MCF 10A (cell line): ENCODE measurements at regions of chr16 and their contacts with region 1.

Region 1: GRCh38 chr16:71610936-71611871 is 14.8 kb upstream of the MARVELD3 start:
- DNase-seq: peak; percentile 65
- H3K4me3 Mint-ChIP-seq: no peak overlapping the region
- H3K27ac Mint-ChIP-seq: no peak overlapping the region
- H3K4me1 Mint-ChIP-seq: no peaks in the 10 kb centered on the region
- H3K27me3 Mint-ChIP-seq: no peaks in the 10 kb centered on the region
- CTCF ChIP-seq: peak; percentile 90

Region 2: GRCh38 chr16:71412270-71413160 is 198.7 kb before region 1 on chr16:
- CTCF ChIA-PET with region 1: interaction called, 50 read pairs
- POLR2A ChIA-PET with region 1: no interaction called
- intact Hi-C with region 1: loop called (anchors 1 kb)
- DNase-seq: peak; percentile 80
- H3K4me3 Mint-ChIP-seq: no peak overlapping the region
- H3K27ac Mint-ChIP-seq: no peak overlapping the region
- H3K4me1 Mint-ChIP-seq: no peaks in the 10 kb centered on the region
- H3K27me3 Mint-ChIP-seq: peaks cover 53% of the 10 kb centered on the region
- CTCF ChIP-seq: peak; percentile 63

Region 3: DNA sequence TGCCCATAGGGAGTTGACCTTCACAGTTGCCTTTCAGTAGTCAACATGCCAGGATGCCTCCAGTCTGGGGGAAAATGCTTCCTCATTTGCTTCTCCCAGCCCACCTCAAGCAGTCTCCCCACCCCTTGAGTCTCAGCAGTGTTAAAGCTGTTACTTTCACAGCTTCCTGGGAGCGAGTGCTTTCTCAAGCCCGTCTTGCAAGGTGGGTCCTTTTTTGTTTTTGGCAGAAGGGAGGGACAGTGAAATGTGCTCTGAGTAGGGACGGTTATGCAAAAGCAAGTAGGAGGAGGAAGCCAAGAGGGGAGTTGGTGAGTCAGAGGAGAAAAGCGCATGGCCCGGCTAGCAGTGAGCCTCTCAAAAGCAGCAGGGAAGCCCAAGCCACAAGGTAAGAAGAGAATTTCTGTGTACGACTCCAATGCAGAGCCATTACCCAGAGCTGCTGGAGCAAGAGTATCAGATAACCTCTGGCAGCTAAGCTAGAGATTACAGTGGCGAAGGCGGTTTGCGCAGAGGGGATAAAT is 85.0 kb before region 1 on chr16 and contains the start of gene CHST4:
- CTCF ChIA-PET with region 1: interaction called, 14 read pairs
- POLR2A ChIA-PET with region 1: no interaction called
- intact Hi-C with region 1: no loop called
- DNase-seq: peak; percentile 70
- H3K4me3 Mint-ChIP-seq: no peak within 1 kb of the TSS
- H3K27ac Mint-ChIP-seq: no peak within 1 kb of the TSS
- H3K4me1 Mint-ChIP-seq: peaks cover 10% of the 10 kb centered on the region
- H3K27me3 Mint-ChIP-seq: no peaks in the 10 kb centered on the region
- CTCF ChIP-seq: no peak
- total RNA-seq, gene CHST4: 0.14 TPM in 1 of 2 replicates, not detected in the other

Region 4: DNA sequence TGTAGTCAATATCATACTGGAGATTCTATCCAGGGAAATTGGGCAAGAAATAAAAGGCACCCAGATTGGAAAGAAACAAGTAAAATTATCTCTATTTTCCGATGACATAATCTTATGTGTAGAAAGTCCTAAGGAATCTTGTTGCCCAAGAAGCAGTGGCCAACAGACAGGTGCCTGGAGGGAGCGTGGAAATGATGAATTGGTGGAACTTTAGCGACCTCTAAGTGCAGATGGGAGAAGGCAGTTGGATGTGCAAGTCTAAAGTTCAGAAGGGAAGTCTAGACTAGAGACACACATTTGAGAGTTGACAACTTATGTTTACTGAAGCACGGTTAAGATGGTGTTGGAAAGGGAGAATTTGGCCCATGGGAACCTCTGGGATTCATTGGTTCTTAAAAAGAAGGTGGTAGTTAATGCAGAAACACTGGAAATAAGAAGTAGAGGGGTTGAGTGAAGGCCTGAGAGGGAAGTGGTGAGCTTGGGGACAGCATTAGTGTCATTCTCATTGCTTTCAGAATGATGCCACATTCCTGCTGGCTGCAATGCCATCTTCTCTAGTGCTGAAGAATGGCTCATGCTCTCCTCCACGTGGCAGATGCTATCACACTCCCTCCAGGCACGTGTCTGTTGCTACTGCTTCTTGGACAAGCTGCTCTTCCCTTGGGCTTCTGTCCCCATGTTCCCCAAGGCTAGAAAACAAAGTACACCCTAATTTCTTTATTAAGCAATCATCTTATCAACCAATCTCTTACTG is 58.3 kb before region 1 on chr16:
- CTCF ChIA-PET with region 1: interaction called, 11 read pairs
- POLR2A ChIA-PET with region 1: interaction called, 3 read pairs
- intact Hi-C with region 1: no loop called
- DNase-seq: peak; percentile 30
- H3K4me3 Mint-ChIP-seq: no peak overlapping the region
- H3K27ac Mint-ChIP-seq: no peak overlapping the region
- H3K4me1 Mint-ChIP-seq: peaks cover 11% of the 10 kb centered on the region
- H3K27me3 Mint-ChIP-seq: peaks cover 36% of the 10 kb centered on the region
- CTCF ChIP-seq: no peak

Region 5: DNA sequence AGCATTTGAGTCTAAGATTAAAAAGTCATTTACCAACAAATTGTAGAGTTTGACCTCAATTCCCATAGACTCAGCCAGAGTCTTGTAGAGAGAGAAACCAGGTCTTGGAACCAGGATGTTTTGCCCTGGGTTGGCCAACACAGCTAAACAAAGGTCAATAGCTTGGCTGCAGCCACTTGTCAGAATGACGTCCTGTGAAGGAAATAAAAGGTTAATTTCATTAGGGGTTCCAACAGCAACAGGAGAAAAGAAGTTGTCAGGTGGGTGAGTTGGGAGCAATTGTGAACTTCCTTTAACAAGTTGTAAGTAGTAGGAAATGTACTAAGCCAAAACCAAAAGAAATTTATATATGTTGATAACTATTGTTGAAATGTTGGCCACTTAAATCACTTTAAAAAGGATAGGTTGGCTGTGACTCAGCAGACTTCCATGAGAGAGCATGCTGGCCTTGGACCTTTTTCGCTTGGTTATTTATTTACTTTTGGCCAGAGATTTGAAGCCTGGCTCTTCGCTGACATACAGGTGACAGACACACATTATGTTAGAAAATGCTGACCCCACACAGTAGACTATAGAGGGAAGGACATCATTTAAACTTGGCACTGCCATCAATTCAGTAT is 38.6 kb before region 1 on chr16:
- CTCF ChIA-PET with region 1: interaction called, 30 read pairs
- POLR2A ChIA-PET with region 1: interaction called, 3 read pairs
- intact Hi-C with region 1: no loop called
- DNase-seq: no peak
- H3K4me3 Mint-ChIP-seq: no peak overlapping the region
- H3K27ac Mint-ChIP-seq: no peak overlapping the region
- H3K4me1 Mint-ChIP-seq: peaks cover 6% of the 10 kb centered on the region
- H3K27me3 Mint-ChIP-seq: peaks cover 41% of the 10 kb centered on the region
- CTCF ChIP-seq: no peak

Region 6: DNA sequence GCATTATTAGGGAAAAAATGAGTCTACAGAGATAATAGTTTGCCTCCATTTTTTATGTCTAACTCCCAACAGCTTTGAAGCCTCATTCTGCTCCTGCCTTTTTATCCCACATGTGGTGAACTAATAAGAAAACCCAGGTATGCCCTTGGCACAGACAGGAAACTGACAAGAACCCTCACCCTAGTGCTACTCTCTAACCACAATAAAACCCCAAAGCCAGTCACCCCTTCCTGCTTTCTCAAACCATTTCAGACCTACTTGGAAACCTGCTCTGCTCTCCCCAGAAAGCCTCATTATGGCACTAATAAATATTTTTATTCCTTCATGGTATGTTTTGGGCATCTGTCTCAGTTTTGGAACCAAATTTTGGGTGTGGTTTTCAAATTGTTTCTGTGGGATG is 10.9 kb after region 1 on chr16:
- CTCF ChIA-PET with region 1: interaction called, 11 read pairs
- POLR2A ChIA-PET with region 1: interaction called, 4 read pairs
- intact Hi-C with region 1: no loop called
- DNase-seq: no peak
- H3K4me3 Mint-ChIP-seq: no peak overlapping the region
- H3K27ac Mint-ChIP-seq: no peak overlapping the region
- H3K4me1 Mint-ChIP-seq: no peaks in the 10 kb centered on the region
- H3K27me3 Mint-ChIP-seq: peaks cover 17% of the 10 kb centered on the region
- CTCF ChIP-seq: no peak

Region 7: DNA sequence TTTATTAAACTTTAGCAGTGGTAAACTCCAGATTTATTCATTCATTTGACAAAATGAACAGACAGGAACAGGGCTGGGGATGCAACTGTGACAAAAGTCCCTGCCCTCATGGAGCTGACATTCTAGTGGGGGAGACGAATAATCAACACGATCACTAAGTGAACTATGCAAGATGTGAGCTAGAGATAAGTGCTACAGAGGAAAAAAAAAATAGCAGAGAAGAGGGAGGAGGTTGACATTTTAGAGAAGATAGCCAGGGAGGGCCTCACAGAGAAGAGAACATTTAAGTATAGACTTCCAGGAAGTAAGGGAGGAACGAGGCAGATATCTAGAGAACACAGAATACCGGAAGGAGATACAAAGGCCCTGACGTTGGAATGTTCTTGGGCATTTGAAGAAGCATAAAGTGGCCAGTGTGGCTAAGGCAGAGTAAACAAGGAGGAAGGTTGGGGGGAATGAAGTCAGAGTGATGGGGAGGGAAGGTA is 215.4 kb after region 1 on chr16:
- CTCF ChIA-PET with region 1: no interaction called
- POLR2A ChIA-PET with region 1: no interaction called
- intact Hi-C with region 1: no loop called
- DNase-seq: no peak
- H3K4me3 Mint-ChIP-seq: no peak overlapping the region
- H3K27ac Mint-ChIP-seq: no peak overlapping the region
- H3K4me1 Mint-ChIP-seq: no peaks in the 10 kb centered on the region
- H3K27me3 Mint-ChIP-seq: no peaks in the 10 kb centered on the region
- CTCF ChIP-seq: no peak